ENCODE measurements at regions of chr9 and their contacts with region 1.

Region 1: DNA sequence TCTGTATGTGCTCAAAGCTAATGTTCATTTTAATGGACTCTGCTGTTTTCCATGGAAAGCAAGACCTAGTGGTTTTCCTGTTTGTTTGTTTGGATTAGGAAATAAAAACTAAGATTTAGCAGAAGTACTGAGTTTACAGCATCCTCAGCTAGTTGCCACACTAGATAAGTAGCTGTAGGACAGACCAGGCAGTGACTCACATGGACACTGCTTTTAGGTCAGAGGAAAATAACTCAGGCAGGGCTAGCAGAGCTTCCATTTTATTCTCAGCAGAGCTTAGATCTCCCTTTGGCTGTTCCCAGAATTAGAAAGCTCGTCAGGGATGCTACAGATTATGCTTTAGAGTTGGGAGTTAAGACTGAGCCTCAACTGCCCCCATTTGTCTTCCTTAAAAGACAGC is 204.4 kb downstream of the SH3GL2 start:
- DNase-seq: no peak
- ATAC-seq: no peak
- H3K4me3 ChIP-seq: no peak overlapping the region
- H3K27ac ChIP-seq: no peak overlapping the region
- H3K4me1 ChIP-seq: no peaks in the 10 kb centered on the region
- H3K27me3 ChIP-seq: no peaks in the 10 kb centered on the region
- CTCF ChIP-seq: no peak
- POLR2A ChIP-seq: no peak
- RAD21 ChIP-seq: no peak

Region 2: DNA sequence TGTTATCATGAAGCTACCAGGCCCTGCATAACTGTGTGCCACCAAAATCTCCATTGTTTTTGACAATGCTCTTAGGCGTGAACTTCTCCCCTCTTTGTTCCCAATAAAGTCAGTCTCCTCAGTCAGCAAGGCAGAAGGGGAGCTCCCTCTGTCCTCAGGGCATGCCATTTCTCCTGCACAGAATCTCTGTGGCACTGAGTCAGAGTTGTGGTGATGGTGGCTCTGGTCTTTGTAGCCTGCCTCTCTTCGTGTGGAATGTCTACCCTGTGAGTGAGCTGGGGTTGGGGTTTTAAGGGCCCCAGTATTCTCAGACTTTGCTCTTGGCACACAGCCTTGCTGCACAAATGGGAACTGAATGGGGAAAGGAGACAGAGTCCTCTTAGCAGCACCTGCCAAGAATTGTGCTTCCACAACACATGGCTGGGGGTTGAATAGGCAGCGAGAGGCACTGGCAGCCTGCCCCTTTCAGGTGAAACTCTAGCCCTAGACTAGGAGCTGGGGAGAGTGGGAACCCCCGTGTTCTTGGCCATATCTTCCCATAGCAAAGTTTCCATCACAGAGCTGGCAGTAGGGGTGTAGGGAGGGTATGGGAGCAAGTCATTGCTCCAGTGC is 57.7 kb before region 1 on chr9:
- CTCF ChIA-PET with region 1: no interaction called
- POLR2A ChIA-PET with region 1: no interaction called
- RAD21 ChIA-PET with region 1: no interaction called
- intact Hi-C with region 1: loop called (anchors 10 kb)
- DNase-seq: no peak
- ATAC-seq: no peak
- H3K4me3 ChIP-seq: no peak overlapping the region
- H3K27ac ChIP-seq: no peak overlapping the region
- H3K4me1 ChIP-seq: no peaks in the 10 kb centered on the region
- H3K27me3 ChIP-seq: no peaks in the 10 kb centered on the region
- CTCF ChIP-seq: no peak
- POLR2A ChIP-seq: no peak
- RAD21 ChIP-seq: no peak

Region 3: DNA sequence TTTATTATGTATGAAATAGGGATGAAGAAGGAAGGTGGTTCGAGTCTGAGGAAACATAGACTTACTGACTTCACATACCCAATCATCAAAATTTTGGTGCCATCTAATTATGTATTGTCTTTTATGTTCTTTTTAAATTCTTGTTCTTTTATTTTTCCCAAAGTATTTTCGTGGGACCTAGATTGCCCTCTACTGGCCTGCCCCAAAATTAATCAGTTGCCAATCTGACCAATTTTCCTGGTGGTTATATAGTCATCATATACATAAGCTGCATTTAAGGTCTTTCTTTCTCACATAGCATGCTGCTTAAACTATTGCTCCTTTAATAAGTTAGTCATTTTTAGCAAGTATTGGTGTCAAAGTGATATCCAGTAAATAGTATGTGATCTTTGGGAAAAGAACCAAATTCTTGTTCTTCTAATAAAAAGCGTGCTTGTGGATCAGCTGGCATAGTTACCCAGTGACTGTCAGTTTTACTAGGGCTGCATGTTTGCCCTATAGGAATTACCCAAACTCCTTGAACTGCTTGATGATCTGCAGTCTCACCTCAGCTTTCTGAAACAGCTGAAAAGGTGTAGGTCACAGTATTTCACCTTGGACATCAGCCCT is 19.1 kb after region 1 on chr9:
- CTCF ChIA-PET with region 1: no interaction called
- POLR2A ChIA-PET with region 1: no interaction called
- RAD21 ChIA-PET with region 1: no interaction called
- intact Hi-C with region 1: no loop called
- DNase-seq: no peak
- ATAC-seq: no peak
- H3K4me3 ChIP-seq: no peak overlapping the region
- H3K27ac ChIP-seq: no peak overlapping the region
- H3K4me1 ChIP-seq: no peaks in the 10 kb centered on the region
- H3K27me3 ChIP-seq: no peaks in the 10 kb centered on the region
- CTCF ChIP-seq: peak in 2 of 3 experiments; percentile 30 to 51; a peak in 3 of 6 replicates
- POLR2A ChIP-seq: no peak
- RAD21 ChIP-seq: peak; percentile 33

Region 4: DNA sequence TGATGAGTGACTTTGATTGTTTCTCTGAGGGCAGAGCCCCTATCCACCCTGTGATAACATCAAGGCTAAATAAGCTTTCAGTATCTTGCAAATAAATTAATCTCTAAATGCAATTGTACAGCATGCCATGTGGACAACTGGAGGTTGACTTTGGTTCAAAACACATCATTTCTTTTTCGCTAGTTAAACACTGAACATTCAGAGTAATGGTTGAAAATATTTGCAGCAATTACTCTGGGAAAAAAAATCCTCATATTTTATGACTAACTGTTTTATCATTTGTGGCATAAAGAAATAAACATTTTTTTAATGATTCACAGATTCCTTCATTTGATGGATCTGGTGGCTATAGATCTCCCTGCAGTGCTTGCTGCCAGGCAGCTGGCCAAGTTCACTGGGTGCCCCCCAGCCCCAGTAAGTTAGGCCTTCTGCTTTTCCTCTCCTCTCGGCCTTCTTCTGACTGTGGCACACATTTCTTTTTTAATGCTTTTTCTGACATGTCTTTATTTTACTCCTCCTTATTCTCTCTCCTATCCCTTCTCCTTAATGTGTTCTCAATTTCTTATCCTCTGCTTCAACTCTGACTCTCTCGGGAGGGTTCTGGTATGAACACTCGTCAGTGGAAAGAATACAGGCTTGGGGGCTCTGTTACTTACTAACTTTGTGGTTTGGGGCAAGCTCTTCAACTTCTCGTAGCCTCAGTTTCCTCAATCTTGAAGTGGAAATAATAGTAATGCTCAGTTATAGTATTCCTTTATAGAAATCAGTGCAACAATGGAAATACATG is 760.4 kb after region 1 on chr9:
- CTCF ChIA-PET with region 1: no interaction called
- POLR2A ChIA-PET with region 1: no interaction called
- RAD21 ChIA-PET with region 1: no interaction called
- intact Hi-C with region 1: no loop called
- DNase-seq: no peak
- ATAC-seq: no peak
- H3K4me3 ChIP-seq: no peak overlapping the region
- H3K27ac ChIP-seq: no peak overlapping the region
- H3K4me1 ChIP-seq: no peaks in the 10 kb centered on the region
- H3K27me3 ChIP-seq: no peaks in the 10 kb centered on the region
- CTCF ChIP-seq: no peak
- POLR2A ChIP-seq: no peak
- RAD21 ChIP-seq: no peak